ENCODE measurements at regions of chr1 and their contacts with region 1.

Region 1: GRCh38 chr1:20493839-20494608 is 8.0 kb upstream of the CAMK2N1 start:
- DNase-seq: peak; percentile 17
- H3K4me3 ChIP-seq: peak overlapping the region in 1 of 4 donors; percentile 9
- H3K27ac ChIP-seq: peak overlapping the region; percentile 13 to 77 (median 58)
- H3K4me1 ChIP-seq: peaks cover 14 to 38% (median 17%) of the 10 kb centered on the region in 3 donors
- H3K27me3 ChIP-seq: peaks cover 0 to 30% (median 0%) of the 10 kb centered on the region in 4 donors
- CTCF ChIP-seq: peak; percentile 96 to 99 (median 98)
- POLR2A ChIP-seq: no peak

Region 2: GRCh38 chr1:20212685-20213331 is 281.2 kb before region 1 on chr1:
- intact Hi-C with region 1: loop called (anchors 5 kb)
- DNase-seq: no peak
- H3K4me3 ChIP-seq: peak overlapping the region in 1 of 4 donors; percentile 26
- H3K27ac ChIP-seq: peak overlapping the region in 3 of 4 donors; percentile 10 to 49 (median 39)
- H3K4me1 ChIP-seq: peaks cover 0 to 26% (median 15%) of the 10 kb centered on the region in 3 donors
- H3K27me3 ChIP-seq: peaks cover 0 to 65% (median 0%) of the 10 kb centered on the region in 4 donors
- CTCF ChIP-seq: peak; percentile 54 to 89 (median 62)
- POLR2A ChIP-seq: no peak

Region 3: DNA sequence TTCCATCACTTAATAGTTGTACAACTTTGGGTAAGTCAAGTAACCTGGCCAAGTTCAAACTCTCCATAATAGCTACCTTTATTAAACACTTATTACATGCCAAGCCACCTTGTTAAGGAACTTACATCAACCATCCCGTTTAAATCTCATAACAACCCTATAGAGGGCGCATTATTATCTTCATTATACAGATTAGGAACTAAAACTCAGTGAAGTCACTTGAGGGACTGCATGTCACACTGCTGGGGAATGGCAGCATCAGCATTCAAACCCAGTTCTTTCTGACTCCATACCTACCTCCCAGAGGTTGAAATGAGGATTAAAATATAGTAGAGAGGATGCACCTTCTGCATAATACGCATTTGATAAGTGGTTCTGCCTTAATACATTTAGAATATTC is 260.6 kb before region 1 on chr1:
- intact Hi-C with region 1: no loop called
- DNase-seq: no peak
- H3K4me3 ChIP-seq: no peak overlapping the region
- H3K27ac ChIP-seq: no peak overlapping the region
- H3K4me1 ChIP-seq: no peaks in the 10 kb centered on the region
- H3K27me3 ChIP-seq: peaks cover 0 to 97% (median 2%) of the 10 kb centered on the region in 4 donors
- CTCF ChIP-seq: peak in 2 of 6 experiments; percentile 19 to 28
- POLR2A ChIP-seq: no peak

Region 4: DNA sequence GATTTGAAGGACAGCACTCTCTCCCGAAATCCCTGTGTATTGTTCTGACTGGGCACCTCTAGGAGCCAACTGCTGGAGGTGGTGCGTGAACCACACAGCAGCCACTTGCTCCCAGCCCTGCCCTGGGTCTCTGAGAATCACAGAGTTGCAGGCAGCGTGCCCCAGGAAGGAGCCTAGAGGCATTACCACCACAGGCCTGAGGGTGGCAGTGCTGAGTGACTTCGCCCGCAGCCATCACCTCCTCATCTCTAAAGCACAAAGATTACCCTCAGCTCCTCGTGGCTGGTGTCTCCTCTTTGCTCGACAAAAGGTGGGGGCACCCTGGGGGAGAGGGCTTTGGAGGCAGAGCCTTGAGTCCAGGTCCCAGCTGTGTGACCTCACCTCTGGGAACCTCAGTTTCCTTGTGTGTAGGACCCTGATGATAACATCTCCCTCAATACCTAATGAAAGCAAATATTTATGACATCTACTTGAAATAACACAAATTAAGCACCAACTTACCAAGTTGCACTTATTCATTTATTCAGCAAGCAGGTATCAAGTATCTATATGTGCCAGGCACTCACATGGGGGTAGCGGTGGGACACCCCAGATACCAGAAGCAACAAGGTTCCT is 117.0 kb before region 1 on chr1:
- intact Hi-C with region 1: loop called (anchors 10 kb)
- DNase-seq: no peak
- H3K4me3 ChIP-seq: no peak overlapping the region
- H3K27ac ChIP-seq: no peak overlapping the region
- H3K4me1 ChIP-seq: peaks cover 0 to 11% (median 3%) of the 10 kb centered on the region in 3 donors
- H3K27me3 ChIP-seq: peaks cover 0 to 69% (median 0%) of the 10 kb centered on the region in 4 donors
- CTCF ChIP-seq: peak in 5 of 6 experiments; percentile 53 to 73 (median 64)
- POLR2A ChIP-seq: no peak

Measured in esophagus squamous epithelium (tissue), 5 donors.